Activated CD4-positive, alpha-beta T cell treated with anti-CD3 and anti-CD28 coated beads for 36 hours (primary cell): ENCODE measurements at regions of chr1 and their contacts with region 1.

Region 1: GRCh38 chr1:151934048-151934493 is 24.8 kb upstream of the THEM4 start:
- DNase-seq: peak; percentile 63
- ATAC-seq: peak; percentile 90
- H3K4me3 Mint-ChIP-seq: no peak overlapping the region
- H3K27ac Mint-ChIP-seq: no peak overlapping the region
- H3K4me1 Mint-ChIP-seq: peaks cover 2% of the 10 kb centered on the region
- H3K27me3 Mint-ChIP-seq: no peaks in the 10 kb centered on the region

Region 2: GRCh38 chr1:151909150-151910149 is 24.6 kb before region 1 on chr1 and contains the start of gene THEM4:
- CTCF ChIA-PET with region 1: interaction called, 11 read pairs
- POLR2A ChIA-PET with region 1: no interaction called
- intact Hi-C with region 1: no loop called
- DNase-seq: peak; percentile 98
- ATAC-seq: peak; percentile 93
- H3K4me3 Mint-ChIP-seq: peak within 1 kb of the TSS; percentile 82
- H3K27ac Mint-ChIP-seq: peak within 1 kb of the TSS; percentile 91
- H3K4me1 Mint-ChIP-seq: peaks cover 42% of the 10 kb centered on the region
- H3K27me3 Mint-ChIP-seq: no peaks in the 10 kb centered on the region
- total RNA-seq, gene THEM4: 23.9 to 26.0 TPM

Region 3: GRCh38 chr1:151968058-151968457 is 34.0 kb after region 1 on chr1:
- CTCF ChIA-PET with region 1: interaction called, 32 read pairs
- POLR2A ChIA-PET with region 1: no interaction called
- intact Hi-C with region 1: loop called (anchors 1 to 5 kb)
- DNase-seq: peak; percentile 63
- ATAC-seq: peak; percentile 78
- H3K4me3 Mint-ChIP-seq: no peak overlapping the region
- H3K27ac Mint-ChIP-seq: no peak overlapping the region
- H3K4me1 Mint-ChIP-seq: peaks cover 18% of the 10 kb centered on the region
- H3K27me3 Mint-ChIP-seq: no peaks in the 10 kb centered on the region

Region 4: DNA sequence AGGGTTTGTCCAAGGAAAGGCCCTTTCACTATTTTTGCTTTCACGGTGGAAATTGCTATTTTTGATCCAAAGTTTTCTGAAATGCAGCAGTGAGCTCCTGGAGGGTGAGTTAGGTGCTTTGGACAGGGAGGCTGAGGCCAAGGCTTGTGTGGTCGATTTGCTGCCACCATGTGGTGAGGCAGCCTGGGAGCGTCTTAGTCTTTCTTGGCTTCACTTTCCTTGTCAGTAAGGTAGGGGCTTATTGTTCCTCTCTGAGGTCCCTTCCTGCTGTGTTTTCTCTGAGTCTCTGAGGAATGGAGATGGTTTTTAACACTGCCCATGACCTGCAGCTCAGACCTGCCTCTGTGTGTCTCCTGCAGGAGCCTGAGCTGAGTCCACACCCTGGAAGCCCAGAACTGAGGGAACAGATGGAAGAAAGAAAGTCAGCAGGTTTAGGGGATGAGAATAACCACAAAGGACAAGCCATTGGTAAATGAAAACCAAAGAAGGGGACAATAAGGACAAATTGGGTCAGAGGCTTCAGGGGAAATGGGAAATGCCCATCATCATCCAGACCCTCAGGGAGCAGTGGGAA is 79.7 kb after region 1 on chr1:
- CTCF ChIA-PET with region 1: interaction called, 7 read pairs
- POLR2A ChIA-PET with region 1: no interaction called
- intact Hi-C with region 1: loop called in 1 of 2 experiments (anchors 1 kb)
- DNase-seq: peak; percentile 72
- ATAC-seq: peak; percentile 49
- H3K4me3 Mint-ChIP-seq: no peak overlapping the region
- H3K27ac Mint-ChIP-seq: no peak overlapping the region
- H3K4me1 Mint-ChIP-seq: peaks cover 3% of the 10 kb centered on the region
- H3K27me3 Mint-ChIP-seq: peaks cover 9% of the 10 kb centered on the region